ENCODE measurements at regions of chr3 and their contacts with region 1.

Region 1: GRCh38 chr3:150840802-150841515 is 64.3 kb downstream of the MINDY4B start:
- DNase-seq: no peak
- H3K4me3 ChIP-seq: no peak overlapping the region
- H3K27ac ChIP-seq: no peak overlapping the region
- H3K4me1 ChIP-seq: no peaks in the 10 kb centered on the region
- H3K27me3 ChIP-seq: no peaks in the 10 kb centered on the region
- CTCF ChIP-seq: no peak

Region 2: GRCh38 chr3:150528354-150528797 is 312.6 kb before region 1 on chr3:
- intact Hi-C with region 1: loop called (anchors 10 kb)
- DNase-seq: no peak
- H3K4me3 ChIP-seq: no peak overlapping the region
- H3K27ac ChIP-seq: no peak overlapping the region
- H3K4me1 ChIP-seq: no peaks in the 10 kb centered on the region
- H3K27me3 ChIP-seq: no peaks in the 10 kb centered on the region
- CTCF ChIP-seq: no peak

Region 3: GRCh38 chr3:150691414-150692040 is 149.4 kb before region 1 on chr3:
- intact Hi-C with region 1: no loop called
- DNase-seq: no peak
- H3K4me3 ChIP-seq: no peak overlapping the region
- H3K27ac ChIP-seq: no peak overlapping the region
- H3K4me1 ChIP-seq: no peaks in the 10 kb centered on the region
- H3K27me3 ChIP-seq: no peaks in the 10 kb centered on the region
- CTCF ChIP-seq: no peak